CD8-positive, alpha-beta T cell (primary cell): ENCODE measurements at regions of chr2 and their contacts with region 1.

Region 1: DNA sequence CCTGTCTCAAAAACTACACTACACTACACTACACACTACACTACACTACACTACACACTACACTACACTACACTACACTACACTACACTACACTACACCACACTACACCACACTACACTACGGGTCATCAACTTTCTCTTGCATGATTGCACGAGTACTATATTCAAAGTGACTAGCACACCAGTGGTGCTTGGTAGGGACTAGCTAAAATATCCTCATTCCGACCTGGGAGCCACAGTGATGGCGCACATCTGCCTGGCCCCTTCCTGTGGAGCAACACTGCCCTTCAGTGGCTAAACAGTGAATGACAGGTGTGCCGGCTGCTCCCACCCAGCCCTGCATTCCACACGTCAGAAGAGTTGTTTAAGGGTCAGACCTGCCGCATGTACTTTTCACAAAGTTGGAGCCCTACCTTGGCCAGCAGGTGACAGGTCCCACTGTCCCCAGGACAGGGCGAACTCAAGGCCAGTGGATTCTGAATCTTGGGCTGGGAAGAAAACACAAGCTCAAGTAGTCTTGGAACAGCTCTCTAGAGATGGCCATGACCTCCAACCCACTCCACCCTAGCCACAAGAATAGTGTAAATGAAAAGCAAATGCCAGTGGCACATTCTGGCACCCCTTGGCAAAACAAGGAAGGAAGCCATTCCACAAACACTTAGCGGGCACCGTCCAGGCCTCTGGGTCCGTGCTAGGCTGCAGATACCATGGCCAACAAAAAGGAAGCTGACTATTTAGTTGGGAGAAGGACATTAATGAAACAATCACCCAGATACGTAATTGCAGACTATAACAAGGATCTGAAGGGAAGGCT is 79.7 kb upstream of the MSH2 start:
- DNase-seq: peak; percentile 37 to 77 (median 61)
- ATAC-seq: peak; percentile 98
- H3K4me3 ChIP-seq: no peak overlapping the region
- H3K4me3 Mint-ChIP-seq: no peak overlapping the region
- H3K27ac ChIP-seq: no peak overlapping the region
- H3K27ac Mint-ChIP-seq: no peak overlapping the region
- H3K4me1 ChIP-seq: no peaks in the 10 kb centered on the region
- H3K4me1 Mint-ChIP-seq: no peaks in the 10 kb centered on the region
- H3K27me3 ChIP-seq: peaks cover 0 to 5% of the 10 kb centered on the region in 2 experiments
- H3K27me3 Mint-ChIP-seq: peaks cover 9% of the 10 kb centered on the region
- CTCF ChIP-seq: peak; percentile 68

Region 2: GRCh38 chr2:46632349-46632748 is 690.9 kb before region 1 on chr2:
- CTCF ChIA-PET with region 1: no interaction called
- POLR2A ChIA-PET with region 1: no interaction called
- intact Hi-C with region 1: loop called in 1 of 2 experiments (anchors 5 kb)
- DNase-seq: peak in 2 of 9 experiments; percentile 29 to 47
- ATAC-seq: no peak
- H3K4me3 ChIP-seq: no peak overlapping the region
- H3K4me3 Mint-ChIP-seq: no peak overlapping the region
- H3K27ac ChIP-seq: no peak overlapping the region
- H3K27ac Mint-ChIP-seq: no peak overlapping the region
- H3K4me1 ChIP-seq: peaks cover 13% of the 10 kb centered on the region
- H3K4me1 Mint-ChIP-seq: peaks cover 19% of the 10 kb centered on the region
- H3K27me3 ChIP-seq: no peaks in the 10 kb centered on the region
- H3K27me3 Mint-ChIP-seq: no peaks in the 10 kb centered on the region
- CTCF ChIP-seq: peak; percentile 41

Region 3: DNA sequence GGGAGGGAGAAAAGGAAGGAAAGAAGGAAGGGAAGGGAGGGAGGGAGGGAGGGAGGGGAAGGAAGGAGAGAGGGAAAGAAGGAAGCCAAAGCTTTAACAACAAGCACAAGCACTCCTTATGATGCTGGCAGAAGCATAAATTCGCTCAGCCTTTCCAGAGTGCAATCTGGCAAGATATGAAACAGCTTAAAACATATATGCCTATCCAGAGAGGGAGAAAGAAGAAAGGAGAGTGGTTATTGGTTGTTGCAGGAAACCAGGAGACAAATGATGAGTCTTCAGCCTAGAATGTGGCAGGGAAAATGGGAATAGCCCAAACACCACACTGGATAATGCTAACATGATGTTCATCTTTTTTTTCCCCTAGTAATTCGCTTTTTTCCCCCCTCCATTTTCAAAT is 232.1 kb before region 1 on chr2:
- CTCF ChIA-PET with region 1: no interaction called
- POLR2A ChIA-PET with region 1: no interaction called
- intact Hi-C with region 1: no loop called
- DNase-seq: no peak
- ATAC-seq: no peak
- H3K4me3 ChIP-seq: no peak overlapping the region
- H3K4me3 Mint-ChIP-seq: no peak overlapping the region
- H3K27ac ChIP-seq: no peak overlapping the region
- H3K27ac Mint-ChIP-seq: no peak overlapping the region
- H3K4me1 ChIP-seq: no peaks in the 10 kb centered on the region
- H3K4me1 Mint-ChIP-seq: no peaks in the 10 kb centered on the region
- H3K27me3 ChIP-seq: no peaks in the 10 kb centered on the region
- H3K27me3 Mint-ChIP-seq: peaks cover 2% of the 10 kb centered on the region
- CTCF ChIP-seq: no peak

Region 4: GRCh38 chr2:47283659-47284058 is 39.6 kb before region 1 on chr2:
- CTCF ChIA-PET with region 1: no interaction called
- POLR2A ChIA-PET with region 1: no interaction called
- intact Hi-C with region 1: loop called in 1 of 2 experiments (anchors 2 kb)
- DNase-seq: no peak
- ATAC-seq: no peak
- H3K4me3 ChIP-seq: no peak overlapping the region
- H3K4me3 Mint-ChIP-seq: no peak overlapping the region
- H3K27ac ChIP-seq: no peak overlapping the region
- H3K27ac Mint-ChIP-seq: no peak overlapping the region
- H3K4me1 ChIP-seq: no peaks in the 10 kb centered on the region
- H3K4me1 Mint-ChIP-seq: no peaks in the 10 kb centered on the region
- H3K27me3 ChIP-seq: no peaks in the 10 kb centered on the region
- H3K27me3 Mint-ChIP-seq: no peaks in the 10 kb centered on the region
- CTCF ChIP-seq: no peak

Region 5: GRCh38 chr2:47336259-47337238 is 13.3 kb after region 1 on chr2:
- CTCF ChIA-PET with region 1: interaction called, 13 read pairs
- POLR2A ChIA-PET with region 1: no interaction called
- intact Hi-C with region 1: no loop called
- DNase-seq: no peak
- ATAC-seq: no peak
- H3K4me3 ChIP-seq: no peak overlapping the region
- H3K4me3 Mint-ChIP-seq: no peak overlapping the region
- H3K27ac ChIP-seq: no peak overlapping the region
- H3K27ac Mint-ChIP-seq: no peak overlapping the region
- H3K4me1 ChIP-seq: no peaks in the 10 kb centered on the region
- H3K4me1 Mint-ChIP-seq: no peaks in the 10 kb centered on the region
- H3K27me3 ChIP-seq: no peaks in the 10 kb centered on the region
- H3K27me3 Mint-ChIP-seq: peaks cover 7% of the 10 kb centered on the region
- CTCF ChIP-seq: no peak